BJ (cell line): ENCODE measurements at regions of chr1 and their contacts with region 1.

Region 1: GRCh38 chr1:172429331-172430127 is 9.0 kb downstream of the C1orf105 start:
- DNase-seq: peak; percentile 35
- H3K4me3 ChIP-seq: no peak overlapping the region
- H3K27me3 ChIP-seq: no peaks in the 10 kb centered on the region
- CTCF ChIP-seq: peak; percentile 76

Region 2: GRCh38 chr1:172417552-172417951 is 12.0 kb before region 1 on chr1:
- CTCF ChIA-PET with region 1: interaction called, 11 read pairs
- POLR2A ChIA-PET with region 1: interaction called, 5 read pairs
- DNase-seq: no peak
- H3K4me3 ChIP-seq: no peak overlapping the region
- H3K27me3 ChIP-seq: no peaks in the 10 kb centered on the region
- CTCF ChIP-seq: no peak

Region 3: GRCh38 chr1:172443626-172444453 is 14.3 kb after region 1 on chr1 and contains the start of gene PIGC:
- CTCF ChIA-PET with region 1: interaction called, 15 read pairs
- POLR2A ChIA-PET with region 1: no interaction called
- DNase-seq: no peak
- H3K4me3 ChIP-seq: peak within 1 kb of the TSS; percentile 92
- H3K27me3 ChIP-seq: no peaks in the 10 kb centered on the region
- CTCF ChIP-seq: peak; percentile 97
- polyA plus RNA-seq, gene PIGC: 20.7 and 24.4 TPM in 2 replicates